ENCODE measurements at regions of chr15 and their contacts with region 1.

Region 1: GRCh38 chr15:89358755-89359439 is 24.3 kb upstream of the POLG start:
- H3K4me3 ChIP-seq: peak overlapping the region; percentile 55
- H3K27ac ChIP-seq: no peak overlapping the region
- H3K4me1 ChIP-seq: peaks cover 4% of the 10 kb centered on the region; the same call in 1 of the 2 replicates
- CTCF ChIP-seq: peak; percentile 99

Region 2: GRCh38 chr15:89184886-89185526 is 173.9 kb before region 1 on chr15:
- CTCF ChIA-PET with region 1: no interaction called
- POLR2A ChIA-PET with region 1: no interaction called
- H3K4me3 ChIP-seq: no peak overlapping the region
- H3K27ac ChIP-seq: no peak overlapping the region
- H3K4me1 ChIP-seq: no peaks in the 10 kb centered on the region
- CTCF ChIP-seq: no peak

Region 3: GRCh38 chr15:89206908-89207331 is 152.0 kb before region 1 on chr15:
- CTCF ChIA-PET with region 1: interaction called, 12 read pairs
- POLR2A ChIA-PET with region 1: no interaction called
- H3K4me3 ChIP-seq: no peak overlapping the region
- H3K27ac ChIP-seq: no peak overlapping the region
- H3K4me1 ChIP-seq: no peaks in the 10 kb centered on the region
- CTCF ChIP-seq: peak; percentile 74

Region 4: GRCh38 chr15:89378296-89379151 is 19.6 kb after region 1 on chr15:
- CTCF ChIA-PET with region 1: interaction called, 237 read pairs
- POLR2A ChIA-PET with region 1: interaction called, 4 read pairs
- H3K4me3 ChIP-seq: no peak overlapping the region
- H3K27ac ChIP-seq: no peak overlapping the region
- H3K4me1 ChIP-seq: peaks cover 15% of the 10 kb centered on the region
- CTCF ChIP-seq: no peak

Region 5: DNA sequence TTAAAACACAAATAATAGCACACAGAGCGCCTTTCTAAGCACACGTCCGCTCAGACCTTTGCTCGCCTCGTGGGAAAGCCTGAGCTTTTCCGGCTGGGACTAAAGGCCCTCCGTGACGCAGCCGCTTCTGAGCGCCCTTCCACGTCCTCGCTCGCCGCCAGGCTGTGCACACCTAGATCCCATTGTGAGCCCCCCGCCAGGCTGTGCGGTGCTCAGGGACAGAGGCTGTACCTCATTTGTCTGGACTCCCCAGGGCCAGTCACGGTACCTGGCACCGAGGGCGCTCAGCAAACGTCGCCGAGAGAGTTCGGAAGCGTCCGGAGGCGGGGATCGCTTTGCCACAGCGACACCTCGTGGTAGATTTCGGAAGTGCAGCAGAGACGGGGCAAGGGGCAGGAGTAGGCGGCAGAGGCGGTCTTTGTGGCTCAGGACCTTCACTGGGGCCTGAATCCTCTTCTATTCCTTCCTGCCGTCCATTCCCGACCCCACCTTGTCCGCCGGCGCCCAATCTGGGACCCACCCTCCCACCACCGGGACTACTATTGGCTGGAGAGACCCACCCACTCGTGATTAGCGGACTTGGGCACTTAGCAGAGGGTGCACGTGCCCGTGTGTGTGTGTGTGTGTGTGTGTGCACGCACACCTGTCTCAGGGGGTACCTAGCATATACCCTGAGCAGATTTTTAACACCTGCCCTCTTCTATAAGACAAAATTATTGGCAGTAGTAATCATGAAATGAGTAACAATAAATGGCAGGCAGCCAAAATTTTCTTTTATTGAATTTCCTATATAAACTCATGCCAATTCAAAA is 71.8 kb after region 1 on chr15:
- CTCF ChIA-PET with region 1: interaction called, 614 read pairs
- POLR2A ChIA-PET with region 1: no interaction called
- H3K4me3 ChIP-seq: peak overlapping the region; percentile 18; the same call in 1 of the 2 replicates
- H3K27ac ChIP-seq: no peak overlapping the region
- H3K4me1 ChIP-seq: no peaks in the 10 kb centered on the region
- CTCF ChIP-seq: peak; percentile 95

Region 6: GRCh38 chr15:89457097-89457496 is 98.2 kb after region 1 on chr15:
- CTCF ChIA-PET with region 1: interaction called, 18 read pairs
- POLR2A ChIA-PET with region 1: no interaction called
- H3K4me3 ChIP-seq: no peak overlapping the region
- H3K27ac ChIP-seq: no peak overlapping the region
- H3K4me1 ChIP-seq: peaks cover 6% of the 10 kb centered on the region
- CTCF ChIP-seq: no peak

Region 7: DNA sequence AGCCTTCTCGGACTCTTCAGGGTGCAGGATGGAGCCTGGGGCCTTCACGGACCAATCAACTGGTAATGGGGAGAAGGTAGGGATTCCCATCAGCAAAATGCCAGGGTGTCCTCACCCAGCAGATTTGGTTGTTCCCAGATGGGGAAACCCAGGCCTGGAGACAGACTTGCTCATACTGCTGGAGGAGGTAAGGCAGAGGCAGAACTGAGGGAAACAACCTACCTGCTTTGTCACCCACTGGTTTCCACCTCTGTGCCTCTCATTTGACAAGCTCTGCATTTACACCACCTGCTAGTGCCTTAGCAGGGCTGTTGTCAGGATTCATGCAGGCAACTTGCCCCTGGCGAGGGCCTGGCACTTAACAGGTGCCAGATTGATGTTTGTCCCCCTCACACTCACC is 121.6 kb after region 1 on chr15:
- CTCF ChIA-PET with region 1: interaction called, 37 read pairs
- POLR2A ChIA-PET with region 1: no interaction called
- H3K4me3 ChIP-seq: no peak overlapping the region
- H3K27ac ChIP-seq: no peak overlapping the region
- H3K4me1 ChIP-seq: no peaks in the 10 kb centered on the region
- CTCF ChIP-seq: no peak

Region 8: DNA sequence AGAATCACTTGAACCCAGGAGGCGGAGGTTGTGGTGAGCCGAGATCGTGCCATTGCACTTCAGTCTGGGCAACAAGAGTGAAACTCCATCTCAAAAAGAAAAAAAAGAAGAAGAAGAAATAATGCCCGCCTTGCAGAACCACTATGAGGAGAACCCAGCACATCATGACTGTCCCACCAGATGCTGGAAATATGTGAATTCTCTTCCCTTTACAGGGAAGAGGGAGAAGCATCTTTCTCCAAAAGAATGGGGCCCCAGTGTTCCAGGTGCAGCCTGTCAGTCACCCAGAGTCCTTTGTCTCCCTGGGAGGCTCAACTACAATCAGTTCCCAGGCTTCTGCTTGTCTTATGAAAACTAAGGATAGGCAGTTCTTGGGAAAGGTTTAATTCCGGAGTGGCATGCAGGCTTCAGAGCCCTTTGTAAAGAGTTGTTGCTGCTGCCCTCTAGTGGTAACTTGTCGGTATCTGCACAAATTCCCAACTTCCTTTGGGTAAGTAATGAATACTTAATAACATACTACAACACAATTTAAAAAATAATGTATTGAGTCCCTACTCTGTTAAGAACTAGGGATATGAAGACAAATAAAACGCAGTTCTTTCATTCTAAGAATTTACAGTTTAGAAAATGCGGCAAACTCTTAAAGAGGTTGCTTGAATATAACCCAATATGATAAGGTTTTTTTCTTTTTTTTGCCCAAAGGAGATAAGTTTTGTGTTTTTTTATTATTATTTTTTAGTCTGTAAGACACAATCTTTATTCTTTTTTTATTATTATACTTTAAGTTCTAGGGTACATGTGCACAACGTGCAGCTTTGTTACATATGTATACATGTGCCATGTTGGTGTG is 197.7 kb after region 1 on chr15:
- CTCF ChIA-PET with region 1: interaction called, 25 read pairs
- POLR2A ChIA-PET with region 1: no interaction called
- H3K4me3 ChIP-seq: no peak overlapping the region
- H3K27ac ChIP-seq: no peak overlapping the region
- H3K4me1 ChIP-seq: no peaks in the 10 kb centered on the region
- CTCF ChIP-seq: peak; percentile 21; the same call in 1 of the 2 replicates